Mammary epithelial cell (primary cell): ENCODE measurements at regions of chr2 and their contacts with region 1.

Region 1: DNA sequence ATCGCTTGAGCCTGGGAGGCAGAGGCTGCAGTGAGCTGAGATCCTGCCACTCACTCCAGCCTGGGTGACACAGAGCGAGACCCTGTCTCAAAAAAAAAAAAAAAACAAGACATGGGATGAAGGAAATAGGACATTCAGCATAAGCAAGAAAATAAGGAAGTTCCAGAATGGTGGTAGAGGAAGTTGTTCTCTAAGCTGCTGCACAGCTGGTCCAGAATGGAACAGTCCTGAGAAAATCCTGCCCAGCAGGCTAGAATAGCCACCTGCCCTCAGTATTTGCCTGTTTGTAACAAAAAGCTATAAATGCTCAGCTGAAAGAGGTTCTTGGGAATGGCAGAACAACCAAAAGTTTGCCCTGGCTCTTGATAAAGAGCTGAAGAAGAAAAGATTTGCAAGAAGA is 11.1 kb upstream of the MAPRE3 start:
- DNase-seq: no peak
- H3K4me3 ChIP-seq: no peak overlapping the region
- H3K27ac ChIP-seq: no peak overlapping the region
- H3K4me1 ChIP-seq: no peaks in the 10 kb centered on the region
- H3K27me3 ChIP-seq: peaks cover 16% of the 10 kb centered on the region
- CTCF ChIP-seq: no peak

Region 2: GRCh38 chr2:26988058-26988860 is 28.9 kb after region 1 on chr2:
- CTCF ChIA-PET with region 1: no interaction called
- dilution Hi-C with region 1: no loop called
- in situ Hi-C with region 1: no loop called
- intact Hi-C with region 1: no loop called
- DNase-seq: peak; percentile 29
- H3K4me3 ChIP-seq: no peak overlapping the region
- H3K27ac ChIP-seq: no peak overlapping the region
- H3K4me1 ChIP-seq: no peaks in the 10 kb centered on the region
- H3K27me3 ChIP-seq: no peaks in the 10 kb centered on the region
- CTCF ChIP-seq: no peak

Region 3: DNA sequence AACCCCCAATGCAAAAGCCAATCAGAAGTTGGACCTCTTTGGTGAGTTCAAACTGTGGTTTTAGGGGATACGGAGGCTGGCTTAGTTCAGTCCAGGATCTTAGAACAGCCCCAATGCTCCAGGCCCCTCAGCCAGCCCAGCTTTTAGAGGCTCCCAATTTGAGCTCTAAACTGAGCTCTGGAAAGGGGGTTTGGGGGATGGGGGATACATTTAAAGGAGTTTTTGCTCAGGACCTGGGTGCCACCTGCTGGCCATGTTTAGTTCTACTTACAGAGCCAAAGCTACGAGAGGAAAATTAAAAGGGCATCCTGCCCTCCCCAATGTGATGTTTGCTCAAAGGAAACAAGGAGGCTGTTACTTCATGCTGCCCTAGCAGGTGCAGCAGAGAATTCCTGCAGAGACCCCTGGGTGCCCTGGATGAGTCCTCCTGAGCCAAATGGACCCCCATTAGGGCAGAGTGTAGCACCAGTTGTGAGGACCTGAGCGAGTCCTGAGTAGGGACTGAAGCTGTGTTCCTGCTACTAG is 57.5 kb after region 1 on chr2:
- CTCF ChIA-PET with region 1: interaction called, 13 read pairs
- dilution Hi-C with region 1: no loop called
- in situ Hi-C with region 1: loop called in 1 of 2 experiments (anchors 5 kb)
- intact Hi-C with region 1: loop called (anchors 1 kb)
- DNase-seq: peak; percentile 25
- H3K4me3 ChIP-seq: no peak overlapping the region
- H3K27ac ChIP-seq: no peak overlapping the region
- H3K4me1 ChIP-seq: peaks cover 20% of the 10 kb centered on the region
- H3K27me3 ChIP-seq: no peaks in the 10 kb centered on the region
- CTCF ChIP-seq: peak; percentile 63 to 71

Region 4: GRCh38 chr2:27050281-27050995 is 91.1 kb after region 1 on chr2:
- CTCF ChIA-PET with region 1: interaction called, 5 read pairs
- dilution Hi-C with region 1: no loop called
- in situ Hi-C with region 1: no loop called
- intact Hi-C with region 1: loop called (anchors 1 kb)
- DNase-seq: peak; percentile 91
- H3K4me3 ChIP-seq: peak overlapping the region; percentile 59 to 99 (median 74)
- H3K27ac ChIP-seq: peak overlapping the region; percentile 37
- H3K4me1 ChIP-seq: peaks cover 15% of the 10 kb centered on the region
- H3K27me3 ChIP-seq: no peaks in the 10 kb centered on the region
- CTCF ChIP-seq: peak in 1 of 2 donors; percentile 51

Region 5: DNA sequence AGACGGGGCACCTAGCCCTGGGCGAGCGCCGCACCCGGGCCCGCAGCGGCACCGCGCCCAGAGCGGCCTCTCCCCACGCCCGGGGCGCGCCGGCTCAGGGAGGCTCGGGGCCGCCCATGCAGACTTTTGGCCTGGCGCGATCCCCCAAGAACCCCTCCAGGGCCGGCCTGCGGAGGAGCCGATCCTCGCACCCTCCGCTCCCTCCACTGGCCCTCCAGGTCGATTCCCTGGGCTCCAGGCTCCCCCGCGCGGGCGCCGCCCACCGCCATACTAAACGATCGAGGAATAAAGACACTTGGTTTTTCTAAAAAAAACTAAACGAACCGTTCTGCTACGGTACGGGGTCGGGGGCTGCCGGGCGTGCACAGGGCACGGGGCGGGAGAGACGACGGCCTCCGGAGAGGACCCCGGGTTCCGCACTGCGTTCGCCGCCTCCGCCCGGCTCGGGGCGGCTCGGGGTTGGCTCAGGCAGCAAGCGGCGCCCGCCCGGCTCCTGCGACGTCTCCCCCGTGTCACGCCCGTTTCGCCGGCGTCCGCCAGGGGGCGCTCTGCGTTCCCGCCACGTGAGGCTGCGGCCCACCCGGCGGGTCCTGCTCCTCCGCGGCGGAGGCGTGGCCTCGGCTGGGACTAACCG is 126.9 kb after region 1 on chr2:
- CTCF ChIA-PET with region 1: interaction called, 9 read pairs
- dilution Hi-C with region 1: no loop called
- in situ Hi-C with region 1: no loop called
- intact Hi-C with region 1: loop called (anchors 1 kb)
- DNase-seq: peak; percentile 87
- H3K4me3 ChIP-seq: peak overlapping the region; percentile 57 to 84 (median 63)
- H3K27ac ChIP-seq: peak overlapping the region; percentile 3
- H3K4me1 ChIP-seq: peaks cover 28% of the 10 kb centered on the region
- H3K27me3 ChIP-seq: no peaks in the 10 kb centered on the region
- CTCF ChIP-seq: peak; percentile 59 to 79

Region 6: DNA sequence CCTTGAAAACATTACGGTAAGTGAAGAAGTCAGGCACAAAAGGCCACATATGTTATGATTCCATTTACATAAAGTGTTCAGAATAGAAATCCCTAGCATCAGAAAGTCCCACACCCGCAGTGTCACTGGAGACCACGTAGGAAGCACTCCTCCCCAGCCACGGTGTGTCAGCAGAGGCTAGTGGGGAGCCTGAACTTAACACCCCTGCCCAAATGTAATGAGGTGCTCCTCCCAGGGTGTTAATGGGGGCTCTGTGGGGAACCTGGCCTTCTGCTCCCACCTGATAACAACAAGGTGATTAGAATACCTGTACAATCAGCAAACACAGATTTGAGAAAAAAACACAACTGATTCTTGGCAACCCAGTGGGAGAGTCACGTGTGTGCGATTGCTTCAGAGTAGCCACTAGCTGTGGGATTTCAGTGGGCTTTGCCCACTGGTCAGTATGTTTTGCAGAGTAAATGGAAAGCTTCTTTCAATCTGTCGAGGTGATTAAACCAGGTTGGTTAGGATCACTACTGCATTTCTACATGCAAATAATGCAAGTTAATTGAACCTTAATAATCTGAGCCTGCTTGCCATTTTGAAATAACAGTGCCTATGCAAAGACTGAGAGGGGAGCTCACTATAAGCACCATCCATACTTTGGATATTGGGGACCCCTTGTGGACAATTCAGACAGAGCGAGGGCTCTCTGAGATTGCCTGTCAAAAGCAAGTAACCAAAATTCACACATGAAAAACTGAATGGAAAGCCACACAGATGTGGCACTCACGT is 231.9 kb after region 1 on chr2:
- CTCF ChIA-PET with region 1: interaction called, 3 read pairs
- dilution Hi-C with region 1: no loop called
- in situ Hi-C with region 1: no loop called
- intact Hi-C with region 1: loop called (anchors 2 kb)
- DNase-seq: peak; percentile 38
- H3K4me3 ChIP-seq: no peak overlapping the region
- H3K27ac ChIP-seq: no peak overlapping the region
- H3K4me1 ChIP-seq: no peaks in the 10 kb centered on the region
- H3K27me3 ChIP-seq: no peaks in the 10 kb centered on the region
- CTCF ChIP-seq: peak; percentile 64 to 67

Region 7: DNA sequence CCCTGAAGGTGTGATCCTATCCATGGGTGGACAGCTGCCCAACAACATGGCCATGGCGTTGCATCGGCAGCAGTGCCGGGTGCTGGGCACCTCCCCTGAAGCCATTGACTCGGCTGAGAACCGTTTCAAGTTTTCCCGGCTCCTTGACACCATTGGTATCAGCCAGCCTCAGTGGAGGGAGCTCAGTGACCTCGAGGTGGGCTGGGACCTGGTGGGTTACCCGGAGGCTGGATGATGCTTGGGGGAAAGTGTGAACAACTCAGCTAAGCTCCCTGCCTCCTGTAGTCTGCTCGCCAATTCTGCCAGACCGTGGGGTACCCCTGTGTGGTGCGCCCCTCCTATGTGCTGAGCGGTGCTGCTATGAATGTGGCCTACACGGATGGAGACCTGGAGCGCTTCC is 274.0 kb after region 1 on chr2:
- CTCF ChIA-PET with region 1: interaction called, 21 read pairs
- dilution Hi-C with region 1: no loop called
- in situ Hi-C with region 1: no loop called
- intact Hi-C with region 1: no loop called
- DNase-seq: no peak
- H3K4me3 ChIP-seq: no peak overlapping the region
- H3K27ac ChIP-seq: no peak overlapping the region
- H3K4me1 ChIP-seq: no peaks in the 10 kb centered on the region
- H3K27me3 ChIP-seq: no peaks in the 10 kb centered on the region
- CTCF ChIP-seq: no peak